ENCODE measurements at regions of chr10 and their contacts with region 1.

Region 1: GRCh38 chr10:25417611-25418010 is 242.8 kb downstream of the GPR158 start:
- DNase-seq: no peak
- ATAC-seq: no peak
- H3K4me3 ChIP-seq: no peak overlapping the region
- H3K4me3 Mint-ChIP-seq: no peak overlapping the region
- H3K27ac ChIP-seq: no peak overlapping the region
- H3K27ac Mint-ChIP-seq: no peak overlapping the region
- H3K4me1 ChIP-seq: no peaks in the 10 kb centered on the region
- H3K4me1 Mint-ChIP-seq: no peaks in the 10 kb centered on the region
- H3K27me3 ChIP-seq: no peaks in the 10 kb centered on the region
- H3K27me3 Mint-ChIP-seq: no peaks in the 10 kb centered on the region
- CTCF ChIP-seq: no peak

Region 2: GRCh38 chr10:24287559-24288195 is 1129.9 kb before region 1 on chr10:
- CTCF ChIA-PET with region 1: no interaction called
- POLR2A ChIA-PET with region 1: no interaction called
- intact Hi-C with region 1: loop called in 1 of 2 experiments (anchors 5 kb)
- DNase-seq: no peak
- ATAC-seq: no peak
- H3K4me3 ChIP-seq: no peak overlapping the region
- H3K4me3 Mint-ChIP-seq: no peak overlapping the region
- H3K27ac ChIP-seq: no peak overlapping the region
- H3K27ac Mint-ChIP-seq: no peak overlapping the region
- H3K4me1 ChIP-seq: no peaks in the 10 kb centered on the region
- H3K4me1 Mint-ChIP-seq: no peaks in the 10 kb centered on the region
- H3K27me3 ChIP-seq: no peaks in the 10 kb centered on the region
- H3K27me3 Mint-ChIP-seq: peaks cover 13% of the 10 kb centered on the region
- CTCF ChIP-seq: no peak

Region 3: GRCh38 chr10:25436431-25436830 is 18.8 kb after region 1 on chr10:
- CTCF ChIA-PET with region 1: no interaction called
- POLR2A ChIA-PET with region 1: no interaction called
- intact Hi-C with region 1: no loop called
- DNase-seq: no peak
- ATAC-seq: no peak
- H3K4me3 ChIP-seq: no peak overlapping the region
- H3K4me3 Mint-ChIP-seq: no peak overlapping the region
- H3K27ac ChIP-seq: no peak overlapping the region
- H3K27ac Mint-ChIP-seq: no peak overlapping the region
- H3K4me1 ChIP-seq: no peaks in the 10 kb centered on the region
- H3K4me1 Mint-ChIP-seq: no peaks in the 10 kb centered on the region
- H3K27me3 ChIP-seq: no peaks in the 10 kb centered on the region
- H3K27me3 Mint-ChIP-seq: no peaks in the 10 kb centered on the region
- CTCF ChIP-seq: no peak

Region 4: DNA sequence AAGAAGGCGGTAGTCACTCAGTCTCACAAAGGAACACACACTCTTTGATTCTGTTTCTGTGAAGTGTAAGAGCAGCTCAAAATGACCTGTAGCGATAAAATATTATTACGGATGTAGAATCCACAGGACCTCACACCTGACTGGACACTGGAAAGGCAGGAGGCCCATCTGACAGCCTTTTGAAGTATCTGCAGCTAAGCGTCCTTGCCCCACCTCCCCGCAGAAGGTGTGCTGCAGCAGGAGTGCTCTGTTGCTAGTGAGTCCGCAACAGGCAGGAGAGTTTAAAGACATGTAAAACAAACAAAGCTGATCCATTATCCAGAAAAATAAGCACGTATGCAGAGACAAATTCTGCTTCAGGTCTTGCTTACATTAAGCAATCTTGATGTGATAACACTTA is 112.7 kb after region 1 on chr10:
- CTCF ChIA-PET with region 1: no interaction called
- POLR2A ChIA-PET with region 1: no interaction called
- intact Hi-C with region 1: no loop called
- DNase-seq: no peak
- ATAC-seq: no peak
- H3K4me3 ChIP-seq: no peak overlapping the region
- H3K4me3 Mint-ChIP-seq: no peak overlapping the region
- H3K27ac ChIP-seq: no peak overlapping the region
- H3K27ac Mint-ChIP-seq: no peak overlapping the region
- H3K4me1 ChIP-seq: no peaks in the 10 kb centered on the region
- H3K4me1 Mint-ChIP-seq: no peaks in the 10 kb centered on the region
- H3K27me3 ChIP-seq: no peaks in the 10 kb centered on the region
- H3K27me3 Mint-ChIP-seq: no peaks in the 10 kb centered on the region
- CTCF ChIP-seq: no peak

Measured in CD4-positive, alpha-beta T cell (primary cell).